Activated B cell treated with CpG ODN at 0.5 μM for 24 hours (primary cell): ENCODE measurements at regions of chr9 and their contacts with region 1.

Region 1: GRCh38 chr9:129823935-129824601 is at the start of gene TOR1A:
- DNase-seq: peak; percentile 84
- ATAC-seq: peak; percentile 92
- H3K4me3 Mint-ChIP-seq: peak within 1 kb of the TSS; percentile 85
- H3K27ac Mint-ChIP-seq: peak within 1 kb of the TSS; percentile 76
- H3K4me1 Mint-ChIP-seq: peaks cover 13% of the 10 kb centered on the region
- H3K27me3 Mint-ChIP-seq: no peaks in the 10 kb centered on the region
- CTCF ChIP-seq: no peak
- total RNA-seq, gene TOR1A: 28.5 and 29.5 TPM in 2 replicates

Region 2: GRCh38 chr9:129835021-129835871 is 11.2 kb after region 1 on chr9 and contains the starts of genes C9orf78 and USP20:
- CTCF ChIA-PET with region 1: interaction called, 3 read pairs
- POLR2A ChIA-PET with region 1: interaction called, 17 read pairs
- intact Hi-C with region 1: loop called (anchors 1 kb)
- DNase-seq: peak; percentile 97
- ATAC-seq: peak; percentile 96
- H3K4me3 Mint-ChIP-seq: peak within 1 kb of the TSS; percentile 99
- H3K27ac Mint-ChIP-seq: peak within 1 kb of the TSS; percentile 98
- H3K4me1 Mint-ChIP-seq: peaks cover 46% of the 10 kb centered on the region
- H3K27me3 Mint-ChIP-seq: no peaks in the 10 kb centered on the region
- CTCF ChIP-seq: no peak
- total RNA-seq, gene C9orf78: 34.1 and 42.7 TPM in 2 replicates
- total RNA-seq, gene USP20: 28.1 and 31.6 TPM in 2 replicates

Region 3: DNA sequence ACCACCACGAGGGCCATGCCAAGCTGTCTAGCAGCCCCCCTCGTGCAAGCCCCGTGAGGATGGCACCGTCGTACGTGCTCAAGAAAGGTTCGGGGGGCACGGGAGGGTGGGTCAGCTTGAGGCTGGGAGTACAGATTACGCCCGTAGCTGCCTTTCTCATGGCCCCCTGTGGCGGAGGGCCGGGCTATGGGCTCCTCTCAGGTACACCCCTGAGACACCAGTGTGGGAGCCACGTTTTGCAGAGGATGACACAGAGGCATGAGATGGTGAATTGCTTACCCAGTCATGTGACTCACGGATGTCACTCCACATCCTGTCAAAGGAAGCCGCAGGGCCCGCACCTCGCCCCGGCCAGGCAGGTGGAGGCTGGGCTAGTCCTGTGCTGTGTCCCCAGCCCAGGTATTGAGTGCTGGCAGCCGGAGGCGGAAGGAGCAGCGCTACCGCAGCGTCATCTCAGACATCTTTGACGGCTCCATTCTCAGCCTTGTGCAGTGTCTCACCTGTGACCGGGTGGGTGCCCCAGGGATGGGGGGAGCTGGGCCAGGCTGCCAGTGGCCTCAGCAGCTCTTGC is 44.9 kb after region 1 on chr9:
- CTCF ChIA-PET with region 1: no interaction called
- POLR2A ChIA-PET with region 1: no interaction called
- intact Hi-C with region 1: no loop called
- DNase-seq: no peak
- ATAC-seq: peak; percentile 76
- H3K4me3 Mint-ChIP-seq: no peak overlapping the region
- H3K27ac Mint-ChIP-seq: no peak overlapping the region
- H3K4me1 Mint-ChIP-seq: peaks cover 22% of the 10 kb centered on the region
- H3K27me3 Mint-ChIP-seq: no peaks in the 10 kb centered on the region
- CTCF ChIP-seq: no peak

Region 4: GRCh38 chr9:130053504-130054324 is 229.6 kb after region 1 on chr9 and contains the start of gene GPR107:
- CTCF ChIA-PET with region 1: no interaction called
- POLR2A ChIA-PET with region 1: no interaction called
- intact Hi-C with region 1: loop called (anchors 5 kb)
- DNase-seq: peak; percentile 73
- ATAC-seq: peak; percentile 96
- H3K4me3 Mint-ChIP-seq: peak within 1 kb of the TSS; percentile 91
- H3K27ac Mint-ChIP-seq: peak within 1 kb of the TSS; percentile 80
- H3K4me1 Mint-ChIP-seq: peaks cover 30% of the 10 kb centered on the region
- H3K27me3 Mint-ChIP-seq: no peaks in the 10 kb centered on the region
- CTCF ChIP-seq: no peak
- total RNA-seq, gene GPR107: 17.7 and 19.6 TPM in 2 replicates